ENCODE measurements at regions of chr19 and their contacts with region 1.

Region 1: DNA sequence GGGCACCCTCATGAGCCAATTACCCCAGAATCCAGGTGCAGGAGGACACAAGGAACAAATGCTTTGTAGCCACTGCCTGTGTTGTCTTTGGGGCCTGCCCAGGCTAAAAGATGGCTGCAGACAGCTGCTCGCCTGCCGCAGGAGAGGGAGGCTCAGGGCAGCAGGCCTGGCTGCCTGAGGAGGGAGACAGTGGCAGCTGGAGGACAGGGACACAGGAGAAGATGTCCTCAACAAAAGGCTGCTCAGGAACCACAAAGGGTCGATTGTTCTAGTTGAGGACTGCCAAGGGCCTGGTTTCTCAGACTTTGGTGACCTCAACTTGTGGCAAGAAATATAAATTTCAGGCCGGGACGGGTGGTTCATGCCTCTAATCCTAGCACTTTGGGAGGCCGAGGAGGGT is 7.6 kb downstream of the SIRT2 start:
- DNase-seq: no peak
- ATAC-seq: no peak
- H3K4me3 ChIP-seq: no peak overlapping the region
- H3K27ac ChIP-seq: no peak overlapping the region
- H3K4me1 ChIP-seq: no peaks in the 10 kb centered on the region
- H3K27me3 ChIP-seq: no peaks in the 10 kb centered on the region
- CTCF ChIP-seq: no peak

Region 2: DNA sequence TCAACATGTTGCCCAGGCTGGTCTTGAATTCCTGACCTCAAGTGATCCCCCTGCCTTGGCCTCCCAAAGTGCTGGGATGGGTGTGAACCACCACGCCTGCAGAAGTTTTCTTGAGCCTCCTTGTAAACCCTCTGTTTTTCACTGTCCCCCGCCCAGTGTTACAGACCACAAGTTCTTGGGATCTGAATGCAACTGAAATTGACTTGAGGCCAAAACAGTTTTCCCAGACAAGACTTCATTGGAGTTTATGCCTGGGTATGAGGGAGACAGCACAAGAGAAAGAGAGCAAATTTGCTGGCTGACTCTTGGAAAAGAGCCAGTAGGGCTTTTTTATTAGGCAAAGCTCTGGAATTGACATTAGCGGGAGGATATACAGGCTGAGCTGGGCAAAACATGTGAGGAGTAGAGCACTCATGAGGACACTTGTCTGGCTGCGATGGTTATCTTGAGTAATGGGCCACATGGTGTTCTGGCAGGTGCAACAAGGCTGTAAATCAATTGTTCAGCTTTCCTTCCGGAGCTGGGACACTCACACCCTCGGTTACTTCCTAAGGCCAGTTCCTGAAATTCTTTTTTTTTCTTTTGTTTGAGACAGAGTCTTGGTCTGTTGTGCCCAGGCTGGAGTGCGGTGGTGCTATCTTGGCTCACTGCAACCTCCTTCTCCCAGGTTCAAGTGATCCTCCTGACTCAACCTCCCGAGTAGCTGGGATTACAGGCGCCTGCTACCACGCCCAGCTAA is 29.3 kb before region 1 on chr19:
- CTCF ChIA-PET with region 1: interaction called, 10 read pairs
- POLR2A ChIA-PET with region 1: interaction called, 5 read pairs
- in situ Hi-C with region 1: no loop called
- intact Hi-C with region 1: no loop called
- DNase-seq: no peak
- ATAC-seq: peak; percentile 39
- H3K4me3 ChIP-seq: no peak overlapping the region
- H3K27ac ChIP-seq: no peak overlapping the region
- H3K4me1 ChIP-seq: peaks cover 17% of the 10 kb centered on the region
- H3K27me3 ChIP-seq: no peaks in the 10 kb centered on the region
- CTCF ChIP-seq: no peak

Region 3: GRCh38 chr19:38877781-38878574 is 13.8 kb before region 1 on chr19 and contains the start of gene RINL:
- CTCF ChIA-PET with region 1: interaction called, 27 read pairs
- POLR2A ChIA-PET with region 1: interaction called, 4 read pairs
- in situ Hi-C with region 1: no loop called
- intact Hi-C with region 1: no loop called
- DNase-seq: no peak
- ATAC-seq: peak; percentile 35
- H3K4me3 ChIP-seq: no peak within 1 kb of the TSS
- H3K27ac ChIP-seq: peak within 1 kb of the TSS; percentile 5; the same call in 1 of the 2 replicates
- H3K4me1 ChIP-seq: peaks cover 7% of the 10 kb centered on the region; the same call in 1 of the 2 replicates
- H3K27me3 ChIP-seq: no peaks in the 10 kb centered on the region
- CTCF ChIP-seq: no peak
- total RNA-seq, gene RINL: 1.3 TPM

Measured in Panc1 (cell line).